ENCODE measurements at regions of chr1 and their contacts with region 1.

Region 1: GRCh38 chr1:182588500-182589452 is at the start of gene RNASEL:
- DNase-seq: peak; percentile 74
- H3K4me3 Mint-ChIP-seq: peak within 1 kb of the TSS; percentile 94
- H3K27ac Mint-ChIP-seq: peak within 1 kb of the TSS; percentile 99
- H3K4me1 Mint-ChIP-seq: peaks cover 46% of the 10 kb centered on the region
- H3K27me3 Mint-ChIP-seq: no peaks in the 10 kb centered on the region
- total RNA-seq, gene RNASEL: 4.5 TPM

Region 2: DNA sequence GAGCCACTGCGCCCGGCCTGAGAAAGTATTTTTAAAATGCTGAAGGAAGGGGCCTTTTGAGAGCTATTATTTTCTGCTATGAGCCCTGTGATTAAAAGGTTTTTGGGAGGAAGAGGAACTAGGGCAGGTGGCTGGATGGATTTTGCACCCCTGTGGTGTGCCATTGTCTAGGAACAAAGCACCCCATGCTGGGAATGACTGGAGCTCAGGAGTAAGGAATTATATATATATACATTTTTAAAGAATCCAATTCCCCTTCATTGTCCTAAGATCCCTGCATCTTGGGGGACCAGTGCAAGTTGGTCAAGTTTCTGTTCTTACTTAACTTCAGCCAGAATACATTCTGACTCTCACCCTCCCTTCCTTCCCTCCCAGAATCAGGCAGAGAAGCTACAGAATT is 618.9 kb before region 1 on chr1:
- CTCF ChIA-PET with region 1: no interaction called
- POLR2A ChIA-PET with region 1: no interaction called
- intact Hi-C with region 1: no loop called
- DNase-seq: no peak
- H3K4me3 Mint-ChIP-seq: no peak overlapping the region
- H3K27ac Mint-ChIP-seq: no peak overlapping the region
- H3K4me1 Mint-ChIP-seq: no peaks in the 10 kb centered on the region
- H3K27me3 Mint-ChIP-seq: peaks cover 17% of the 10 kb centered on the region

Region 3: DNA sequence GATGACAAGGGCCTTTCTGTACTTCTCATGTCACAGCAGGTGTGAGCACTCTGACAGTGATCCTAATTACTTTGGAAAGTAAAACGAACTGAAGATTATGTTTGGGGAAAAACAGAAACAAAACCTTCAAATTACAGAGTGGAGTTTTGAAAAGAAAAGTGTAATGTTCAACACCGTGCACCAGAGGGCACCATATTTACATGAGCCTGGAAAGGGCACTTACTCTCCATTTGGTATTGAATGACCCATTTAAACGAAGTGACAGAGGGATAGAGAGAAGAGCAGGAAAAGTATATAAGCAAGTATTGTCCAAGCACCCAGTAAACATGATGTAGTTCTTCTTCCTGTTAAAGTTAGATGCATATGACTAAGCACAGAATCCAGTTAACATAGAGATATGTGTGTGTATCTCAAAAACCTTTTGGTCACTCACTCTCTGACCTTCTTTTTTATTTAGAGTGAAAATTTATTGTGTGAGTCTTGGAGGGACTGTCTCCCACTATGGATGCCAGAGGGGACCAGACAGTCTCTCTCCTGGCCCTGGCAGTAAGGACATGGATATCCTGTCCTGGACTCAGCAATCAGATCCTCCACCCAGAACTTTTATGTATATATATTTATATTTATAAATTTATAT is 142.6 kb before region 1 on chr1:
- CTCF ChIA-PET with region 1: interaction called, 3 read pairs
- POLR2A ChIA-PET with region 1: no interaction called
- intact Hi-C with region 1: loop called (anchors 1 kb)
- DNase-seq: peak; percentile 17
- H3K4me3 Mint-ChIP-seq: peak overlapping the region; percentile 30
- H3K27ac Mint-ChIP-seq: no peak overlapping the region
- H3K4me1 Mint-ChIP-seq: peaks cover 3% of the 10 kb centered on the region
- H3K27me3 Mint-ChIP-seq: peaks cover 4% of the 10 kb centered on the region

Measured in activated CD4-positive, alpha-beta memory T cell treated with anti-CD3 and anti-CD28 coated beads for 36 hours (primary cell).